Common myeloid progenitor, CD34-positive (primary cell): ENCODE measurements at regions of chr6 and their contacts with region 1.

Region 1: GRCh38 chr6:158769771-158770432 is 49.3 kb downstream of the EZR start:
- DNase-seq: no peak
- H3K4me3 ChIP-seq: no peak overlapping the region
- H3K27ac ChIP-seq: no peak overlapping the region
- H3K4me1 ChIP-seq: no peaks in the 10 kb centered on the region
- H3K27me3 ChIP-seq: no peaks in the 10 kb centered on the region

Region 2: GRCh38 chr6:158729914-158730907 is 39.7 kb before region 1 on chr6:
- CTCF ChIA-PET with region 1: no interaction called
- POLR2A ChIA-PET with region 1: no interaction called
- DNase-seq: peak in 1 of 3 donors; percentile 29
- H3K4me3 ChIP-seq: peak overlapping the region in 1 of 7 experiments; percentile 7
- H3K27ac ChIP-seq: no peak overlapping the region
- H3K4me1 ChIP-seq: no peaks in the 10 kb centered on the region
- H3K27me3 ChIP-seq: no peaks in the 10 kb centered on the region

Region 3: GRCh38 chr6:158780988-158781708 is 11.2 kb after region 1 on chr6:
- CTCF ChIA-PET with region 1: interaction called, 19 read pairs
- POLR2A ChIA-PET with region 1: no interaction called
- DNase-seq: no peak
- H3K4me3 ChIP-seq: no peak overlapping the region
- H3K27ac ChIP-seq: no peak overlapping the region
- H3K4me1 ChIP-seq: no peaks in the 10 kb centered on the region
- H3K27me3 ChIP-seq: no peaks in the 10 kb centered on the region

Region 4: DNA sequence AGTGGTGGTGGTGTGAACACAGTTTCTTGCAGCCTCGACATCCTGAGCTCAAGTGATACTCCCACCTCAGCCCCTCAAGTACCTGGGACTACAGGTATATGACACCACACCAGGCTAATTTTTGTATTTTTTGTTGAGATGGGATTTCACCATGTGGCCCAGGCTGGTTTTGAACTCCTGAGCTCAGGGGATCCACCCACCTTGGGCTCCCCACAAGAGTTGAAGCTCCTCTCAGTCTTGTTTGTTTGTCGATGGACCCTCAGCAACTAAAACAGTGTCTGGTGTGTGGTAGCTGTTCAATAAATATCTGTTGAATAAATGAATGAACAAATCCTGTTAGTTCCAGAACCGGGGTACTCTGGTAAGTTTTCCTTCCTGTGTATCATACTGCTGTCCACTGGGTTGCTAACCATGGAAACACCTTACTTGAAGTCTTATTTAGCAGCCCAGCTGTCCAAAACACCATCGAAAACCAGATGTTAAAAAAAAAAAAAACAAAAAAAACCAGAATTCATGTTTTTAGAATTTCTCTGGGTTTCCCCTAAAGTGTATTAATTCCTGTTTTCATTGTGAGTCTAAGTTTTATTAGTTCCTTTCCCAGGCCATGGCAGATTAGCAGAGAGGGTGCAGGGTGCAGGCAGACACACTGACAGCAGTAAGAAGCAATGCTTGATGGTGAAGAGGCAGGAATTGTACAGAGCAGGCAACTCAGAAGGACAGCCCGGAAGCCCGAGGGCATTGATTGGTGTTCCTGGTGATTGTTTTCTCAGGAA is 57.1 kb after region 1 on chr6:
- CTCF ChIA-PET with region 1: no interaction called
- POLR2A ChIA-PET with region 1: no interaction called
- DNase-seq: peak in 2 of 3 donors; percentile 61 to 68
- H3K4me3 ChIP-seq: no peak overlapping the region
- H3K27ac ChIP-seq: no peak overlapping the region
- H3K4me1 ChIP-seq: peaks cover 0 to 3% (median 1%) of the 10 kb centered on the region in 4 experiments
- H3K27me3 ChIP-seq: no peaks in the 10 kb centered on the region